Activated T-helper 2 cell treated with anti-CD3 and anti-CD28 coated beads, Interferon-gamma antibody, Interleukin-2, Interleukin-4, amounts not matched to agents 10 μg/mL and 5 μg/mL and 100 μg/mL, durations not matched to agents 14 hours and 24 hours and 36 hours (primary cell): ENCODE measurements at regions of chr1 and their contacts with region 1.

Region 1: DNA sequence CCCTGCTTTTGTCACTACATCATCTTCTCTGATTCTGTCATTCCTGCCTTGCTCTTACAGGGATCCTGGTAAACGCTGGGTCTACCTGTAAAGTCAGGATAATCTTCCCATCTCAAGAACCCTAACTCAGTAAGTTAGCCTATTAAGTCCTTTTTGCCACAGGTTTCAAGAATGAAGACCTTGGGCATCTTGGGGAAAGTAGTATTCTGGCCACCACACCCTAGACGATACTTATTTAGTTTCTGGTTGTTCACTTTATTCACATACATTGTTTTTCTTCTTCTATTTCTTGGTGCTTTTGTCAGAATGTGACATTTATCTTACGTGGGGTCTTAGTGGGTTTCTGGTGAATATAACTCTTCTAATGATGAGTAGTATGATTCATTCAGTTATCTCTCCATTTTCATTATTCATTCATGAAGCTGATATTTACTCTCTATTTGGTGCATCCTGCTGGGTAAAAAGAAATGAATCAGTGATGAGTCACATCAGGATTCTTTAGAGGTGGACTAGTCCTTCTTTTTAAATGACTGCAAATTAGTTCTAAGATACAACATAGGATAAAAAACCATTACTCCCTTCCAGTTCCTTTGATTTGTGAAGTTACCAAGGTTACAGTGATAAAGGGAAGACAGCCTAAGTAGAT is 514.4 kb upstream of the B3GALT2 start:
- DNase-seq: no peak
- H3K4me3 Mint-ChIP-seq: peak overlapping the region; percentile 5
- H3K27ac Mint-ChIP-seq: peak overlapping the region; percentile 72
- H3K4me1 Mint-ChIP-seq: peaks cover 38% of the 10 kb centered on the region
- H3K27me3 Mint-ChIP-seq: no peaks in the 10 kb centered on the region

Region 2: GRCh38 chr1:192539297-192540092 is 1161.3 kb before region 1 on chr1:
- intact Hi-C with region 1: loop called (anchors 10 kb)
- DNase-seq: no peak
- H3K4me3 Mint-ChIP-seq: no peak overlapping the region
- H3K27ac Mint-ChIP-seq: peak overlapping the region; percentile 72
- H3K4me1 Mint-ChIP-seq: peaks cover 52% of the 10 kb centered on the region
- H3K27me3 Mint-ChIP-seq: no peaks in the 10 kb centered on the region

Region 3: GRCh38 chr1:193408782-193409293 is 292.0 kb before region 1 on chr1:
- intact Hi-C with region 1: loop called (anchors 1 kb)
- DNase-seq: no peak
- H3K4me3 Mint-ChIP-seq: no peak overlapping the region
- H3K27ac Mint-ChIP-seq: no peak overlapping the region
- H3K4me1 Mint-ChIP-seq: peaks cover 36% of the 10 kb centered on the region
- H3K27me3 Mint-ChIP-seq: no peaks in the 10 kb centered on the region

Region 4: DNA sequence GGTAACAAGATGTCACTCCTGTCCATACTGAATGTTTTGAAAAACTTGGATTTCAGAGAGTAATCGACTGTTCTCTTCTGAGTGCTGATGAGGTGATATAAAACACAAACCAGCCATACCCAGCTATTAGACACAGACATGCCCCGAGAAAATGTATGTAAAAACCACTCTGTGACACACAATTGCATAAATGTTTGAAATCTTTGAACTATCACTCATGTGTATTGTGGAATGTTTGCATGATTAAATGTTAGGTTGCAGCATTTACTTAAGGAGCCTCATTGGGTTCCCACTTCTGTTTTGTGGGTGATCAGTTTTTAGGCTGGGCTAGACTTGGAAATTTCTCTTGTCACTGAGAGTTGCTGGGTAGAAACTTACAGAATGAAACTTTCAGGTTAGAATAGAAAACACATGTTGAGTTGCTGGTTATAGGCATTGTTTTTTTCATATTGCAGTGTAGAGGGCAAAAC is 244.0 kb before region 1 on chr1:
- intact Hi-C with region 1: loop called (anchors 5 kb)
- DNase-seq: no peak
- H3K4me3 Mint-ChIP-seq: no peak overlapping the region
- H3K27ac Mint-ChIP-seq: no peak overlapping the region
- H3K4me1 Mint-ChIP-seq: peaks cover 25% of the 10 kb centered on the region
- H3K27me3 Mint-ChIP-seq: no peaks in the 10 kb centered on the region

Region 5: DNA sequence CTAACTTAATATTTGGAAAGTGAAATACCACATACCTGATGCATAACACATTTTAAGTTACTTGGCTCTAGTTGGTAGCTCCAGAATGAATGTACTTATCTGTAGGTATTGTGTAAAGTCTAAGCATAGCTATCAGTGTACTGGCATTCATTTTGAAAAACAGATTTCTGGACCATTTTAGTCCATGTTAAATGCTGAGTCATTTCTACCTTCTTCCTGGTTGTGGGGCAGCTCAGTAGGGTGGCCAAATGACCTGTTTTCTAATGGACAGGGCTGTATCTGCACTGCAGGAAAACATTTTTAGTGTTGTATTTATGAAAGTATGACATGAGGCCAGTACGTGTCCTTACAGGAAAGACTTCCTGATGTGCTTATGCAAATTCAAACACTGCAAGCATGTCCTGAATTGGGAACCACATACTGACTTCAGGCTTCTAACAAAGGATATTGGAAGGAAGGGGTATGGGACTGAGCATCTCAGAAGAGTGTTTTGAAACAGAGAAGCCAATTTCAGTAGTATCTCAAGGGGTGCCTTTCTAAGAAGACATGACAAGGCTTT is 214.1 kb before region 1 on chr1:
- intact Hi-C with region 1: no loop called
- DNase-seq: no peak
- H3K4me3 Mint-ChIP-seq: no peak overlapping the region
- H3K27ac Mint-ChIP-seq: no peak overlapping the region
- H3K4me1 Mint-ChIP-seq: peaks cover 18% of the 10 kb centered on the region
- H3K27me3 Mint-ChIP-seq: no peaks in the 10 kb centered on the region

Region 6: DNA sequence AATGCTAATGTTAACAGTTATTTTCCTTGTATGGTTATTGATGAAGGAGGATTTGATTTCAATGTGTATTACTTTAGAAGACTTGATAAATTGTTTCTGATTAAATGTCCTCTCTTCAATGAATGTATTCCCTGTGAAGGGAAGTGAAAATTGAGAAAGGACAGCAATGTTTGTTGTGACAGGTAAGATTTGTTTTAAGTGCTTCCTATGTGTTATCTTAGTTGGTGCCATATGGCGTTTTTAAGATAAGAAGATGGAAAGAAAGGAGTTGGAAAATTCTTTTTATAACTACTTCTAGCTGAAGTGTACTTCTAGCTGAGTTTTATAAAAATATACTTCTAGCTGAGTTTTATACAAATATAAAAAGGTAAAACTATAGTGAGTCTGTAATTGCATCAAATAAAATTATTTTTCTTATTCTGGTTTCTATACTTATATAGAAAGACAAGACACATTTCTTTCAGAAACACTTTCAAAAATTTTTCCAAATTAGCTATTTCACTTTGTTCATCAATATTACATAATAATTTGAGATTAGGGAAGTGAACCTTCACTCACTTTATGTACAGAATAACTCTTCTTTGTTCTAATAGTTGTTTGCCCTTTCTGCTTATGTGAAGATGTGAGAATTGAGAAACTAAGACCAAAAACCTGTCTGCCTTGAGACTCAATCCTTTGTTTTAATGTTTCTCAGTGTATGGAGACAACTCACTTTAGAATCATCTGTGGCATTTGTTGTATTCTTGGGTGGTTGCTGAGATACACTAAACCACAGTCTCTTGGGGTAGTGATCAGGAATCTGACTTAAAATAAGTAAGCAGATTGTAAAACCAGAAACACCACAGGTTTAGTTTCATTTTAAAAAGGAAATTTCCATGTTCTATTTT is 131.5 kb before region 1 on chr1:
- intact Hi-C with region 1: loop called (anchors 1 kb)
- DNase-seq: no peak
- H3K4me3 Mint-ChIP-seq: no peak overlapping the region
- H3K27ac Mint-ChIP-seq: peak overlapping the region; percentile 77
- H3K4me1 Mint-ChIP-seq: peaks cover 33% of the 10 kb centered on the region
- H3K27me3 Mint-ChIP-seq: no peaks in the 10 kb centered on the region

Region 7: GRCh38 chr1:193602705-193603104 is 98.1 kb before region 1 on chr1:
- intact Hi-C with region 1: no loop called
- DNase-seq: no peak
- H3K4me3 Mint-ChIP-seq: no peak overlapping the region
- H3K27ac Mint-ChIP-seq: no peak overlapping the region
- H3K4me1 Mint-ChIP-seq: peaks cover 30% of the 10 kb centered on the region
- H3K27me3 Mint-ChIP-seq: no peaks in the 10 kb centered on the region

Region 8: DNA sequence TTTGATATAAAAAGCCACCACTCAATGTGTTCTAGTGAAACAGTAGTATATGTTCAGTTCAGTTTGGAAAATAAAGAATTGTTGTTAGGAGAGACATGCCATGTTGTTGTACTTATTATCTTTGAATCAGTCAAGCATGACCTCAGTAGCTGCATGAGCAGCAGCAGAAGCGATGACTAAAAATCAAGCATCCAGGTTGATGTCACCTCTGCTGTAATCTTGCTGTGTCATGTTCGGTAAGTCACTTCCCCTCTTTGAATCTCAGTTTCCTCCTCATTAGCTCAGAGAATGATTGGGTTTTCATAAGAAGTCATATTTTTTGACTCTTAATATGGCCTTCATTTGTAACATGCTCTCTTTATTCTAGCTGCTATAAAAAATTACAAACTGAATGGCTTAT is 86.0 kb before region 1 on chr1:
- intact Hi-C with region 1: loop called (anchors 2 kb)
- DNase-seq: no peak
- H3K4me3 Mint-ChIP-seq: no peak overlapping the region
- H3K27ac Mint-ChIP-seq: no peak overlapping the region
- H3K4me1 Mint-ChIP-seq: peaks cover 4% of the 10 kb centered on the region
- H3K27me3 Mint-ChIP-seq: no peaks in the 10 kb centered on the region

Region 9: DNA sequence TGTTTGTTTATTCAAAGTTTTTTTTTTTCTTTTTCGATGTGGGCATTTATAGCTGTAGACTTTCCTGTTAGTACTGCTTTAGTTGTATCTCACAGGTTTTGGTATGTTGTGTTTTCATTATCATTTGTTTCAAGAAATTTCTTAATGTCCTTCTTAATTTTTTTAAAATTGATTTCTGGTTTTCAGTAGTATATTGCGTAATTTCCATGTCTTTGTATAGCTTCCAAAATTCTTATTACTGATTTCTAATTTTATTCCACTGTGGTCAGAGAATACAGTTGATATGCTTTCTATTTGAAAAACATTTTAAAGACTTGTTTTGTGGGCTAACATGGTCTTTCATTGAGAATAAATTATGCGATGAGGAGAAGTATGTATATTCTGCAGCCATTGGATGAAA is 51.2 kb before region 1 on chr1:
- intact Hi-C with region 1: no loop called
- DNase-seq: no peak
- H3K4me3 Mint-ChIP-seq: no peak overlapping the region
- H3K27ac Mint-ChIP-seq: no peak overlapping the region
- H3K4me1 Mint-ChIP-seq: no peaks in the 10 kb centered on the region
- H3K27me3 Mint-ChIP-seq: no peaks in the 10 kb centered on the region

Region 10: GRCh38 chr1:193799948-193800690 is 99.3 kb after region 1 on chr1:
- intact Hi-C with region 1: loop called (anchors 1 kb)
- DNase-seq: no peak
- H3K4me3 Mint-ChIP-seq: no peak overlapping the region
- H3K27ac Mint-ChIP-seq: peak overlapping the region; percentile 5
- H3K4me1 Mint-ChIP-seq: peaks cover 13% of the 10 kb centered on the region
- H3K27me3 Mint-ChIP-seq: no peaks in the 10 kb centered on the region